SK-N-SH (cell line): ENCODE measurements at regions of chr11 and their contacts with region 1.

Region 1: GRCh38 chr11:35305670-35306382 is 113.5 kb downstream of the SLC1A2 start:
- DNase-seq: peak; percentile 63
- H3K4me3 ChIP-seq: no peak overlapping the region
- H3K27ac ChIP-seq: no peak overlapping the region
- H3K4me1 ChIP-seq: no peaks in the 10 kb centered on the region; a peak in 1 of 4 replicates
- H3K27me3 ChIP-seq: no peaks in the 10 kb centered on the region
- CTCF ChIP-seq: peak; percentile 59
- EP300 ChIP-seq: no peak
- RAD21 ChIP-seq: peak; percentile 85

Region 2: DNA sequence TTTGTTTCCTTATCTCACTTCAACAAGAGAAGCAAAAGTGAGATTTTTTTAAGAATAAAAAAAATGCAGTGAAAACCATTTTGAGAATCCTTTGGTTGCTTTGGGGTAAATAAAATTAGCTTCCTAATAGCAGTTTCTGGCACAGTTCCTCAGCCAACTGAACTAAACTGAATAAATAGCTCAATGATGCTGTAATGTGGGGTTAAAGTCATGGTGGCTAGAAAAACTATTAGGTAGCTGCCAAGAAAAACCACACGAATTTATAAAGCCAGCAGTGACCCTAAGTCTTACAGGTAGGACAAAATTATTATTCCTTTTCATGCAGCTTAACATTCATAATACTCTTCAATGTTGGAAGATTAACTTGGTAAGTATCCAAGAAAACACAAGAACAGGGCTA is 532.0 kb before region 1 on chr11:
- CTCF ChIA-PET with region 1: no interaction called
- POLR2A ChIA-PET with region 1: no interaction called
- DNase-seq: no peak
- H3K4me3 ChIP-seq: no peak overlapping the region
- H3K27ac ChIP-seq: no peak overlapping the region
- H3K4me1 ChIP-seq: no peaks in the 10 kb centered on the region
- H3K27me3 ChIP-seq: no peaks in the 10 kb centered on the region
- CTCF ChIP-seq: no peak
- EP300 ChIP-seq: no peak
- RAD21 ChIP-seq: no peak

Region 3: DNA sequence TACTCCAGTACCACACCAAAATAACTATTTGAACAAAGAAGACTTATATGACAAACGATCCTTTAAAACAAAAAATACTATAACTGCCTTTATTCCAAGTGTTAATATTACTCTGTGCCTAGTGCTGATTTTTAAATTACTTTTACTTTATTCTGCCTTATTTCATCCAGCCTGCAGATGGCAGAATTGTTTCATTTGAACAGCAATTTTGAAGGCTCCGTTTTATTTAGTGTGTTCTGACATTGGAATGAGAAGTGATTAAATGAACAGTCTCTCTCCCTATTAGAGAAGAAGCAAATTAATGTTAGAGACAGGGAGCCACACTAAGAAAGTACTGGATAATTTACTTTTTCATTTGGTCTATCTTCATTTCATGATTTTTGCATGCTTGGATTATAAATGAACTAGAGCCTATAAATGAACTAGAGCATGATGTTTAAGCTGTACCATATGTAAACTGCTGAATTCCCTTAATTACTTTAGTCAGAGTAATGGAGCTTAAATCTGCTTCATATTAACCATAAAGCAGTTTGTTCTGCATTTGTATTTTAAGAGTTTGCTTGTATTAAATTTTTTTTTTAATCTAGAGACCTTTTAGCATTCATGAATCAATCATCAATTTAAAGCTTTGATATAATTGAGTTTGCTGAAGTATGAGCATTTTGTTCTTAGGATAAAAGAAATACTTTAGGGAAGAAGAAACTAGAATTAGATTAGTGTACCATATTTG is 379.6 kb before region 1 on chr11:
- CTCF ChIA-PET with region 1: interaction called, 55 read pairs
- POLR2A ChIA-PET with region 1: no interaction called
- DNase-seq: peak; percentile 34
- H3K4me3 ChIP-seq: peak overlapping the region in 1 of 2 experiments; percentile 7; a peak in 1 of 4 replicates
- H3K27ac ChIP-seq: peak overlapping the region; percentile 63 to 67; a peak in 3 of 4 replicates
- H3K4me1 ChIP-seq: peaks cover 11 to 30% of the 10 kb centered on the region in 2 experiments; a peak in 2 of 4 replicates
- H3K27me3 ChIP-seq: no peaks in the 10 kb centered on the region
- CTCF ChIP-seq: peak; percentile 91
- EP300 ChIP-seq: 0 out of 4 replicates have a peak, but pooled peaks of 1 of the 2 experiments have one; percentile 2
- RAD21 ChIP-seq: peak; percentile 92

Region 4: GRCh38 chr11:34997952-34998528 is 307.8 kb before region 1 on chr11:
- CTCF ChIA-PET with region 1: interaction called, 11 read pairs
- POLR2A ChIA-PET with region 1: no interaction called
- DNase-seq: peak; percentile 4
- H3K4me3 ChIP-seq: no peak overlapping the region; a peak in 1 of 4 replicates
- H3K27ac ChIP-seq: peak overlapping the region in 1 of 2 experiments; percentile 79; a peak in 2 of 4 replicates
- H3K4me1 ChIP-seq: peaks cover 0 to 16% of the 10 kb centered on the region in 2 experiments; a peak in 2 of 4 replicates
- H3K27me3 ChIP-seq: no peaks in the 10 kb centered on the region
- CTCF ChIP-seq: peak; percentile 74
- EP300 ChIP-seq: peak in 1 of 2 experiments; percentile 40; a peak in 1 of 4 replicates
- RAD21 ChIP-seq: peak; percentile 69

Region 5: DNA sequence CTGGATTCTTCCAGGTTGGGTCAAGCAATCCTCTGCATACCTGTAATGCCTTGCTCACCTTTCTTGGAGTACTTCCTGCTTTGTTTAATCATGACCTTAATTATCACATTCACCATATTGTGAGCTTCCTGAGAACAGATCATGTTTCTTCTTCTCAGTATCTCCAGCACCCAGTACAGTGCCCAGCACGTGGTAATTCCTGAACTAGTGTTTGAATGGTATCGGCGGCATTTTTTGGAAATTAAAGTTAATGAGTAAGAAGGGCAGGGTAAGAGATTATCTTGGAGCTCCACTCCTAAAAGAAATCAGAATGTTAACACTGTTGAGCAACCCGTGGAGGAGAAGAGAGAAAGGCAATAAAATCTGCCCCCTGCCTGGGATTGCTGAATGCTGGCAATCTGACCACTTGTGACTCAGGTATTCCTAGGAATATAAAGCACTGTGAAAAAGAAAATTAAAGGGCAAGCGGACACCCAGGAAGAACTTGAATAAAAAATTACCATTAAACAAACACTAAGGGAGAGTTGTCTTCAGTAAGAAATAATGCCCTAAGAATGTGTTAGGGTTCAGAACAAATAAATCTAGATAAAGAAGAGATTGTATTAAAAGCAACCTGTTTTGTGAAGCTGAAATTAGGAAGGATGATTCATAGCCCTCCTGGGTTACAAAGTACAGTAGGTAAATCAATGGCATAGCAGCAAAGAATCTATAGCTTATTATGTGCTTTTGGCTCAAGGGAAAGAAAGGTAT is 296.5 kb before region 1 on chr11:
- CTCF ChIA-PET with region 1: interaction called, 12 read pairs
- POLR2A ChIA-PET with region 1: no interaction called
- DNase-seq: no peak
- H3K4me3 ChIP-seq: no peak overlapping the region
- H3K27ac ChIP-seq: peak overlapping the region in 1 of 2 experiments; percentile 58; a peak in 2 of 4 replicates
- H3K4me1 ChIP-seq: peaks cover 0 to 9% of the 10 kb centered on the region in 2 experiments
- H3K27me3 ChIP-seq: no peaks in the 10 kb centered on the region
- CTCF ChIP-seq: no peak
- EP300 ChIP-seq: 0 out of 4 replicates have a peak, but pooled peaks of 1 of the 2 experiments have one; percentile 7
- RAD21 ChIP-seq: no peak

Region 6: GRCh38 chr11:35106595-35106994 is 199.2 kb before region 1 on chr11:
- CTCF ChIA-PET with region 1: no interaction called
- POLR2A ChIA-PET with region 1: no interaction called
- DNase-seq: no peak
- H3K4me3 ChIP-seq: no peak overlapping the region
- H3K27ac ChIP-seq: no peak overlapping the region
- H3K4me1 ChIP-seq: peaks cover 0 to 12% of the 10 kb centered on the region in 2 experiments; a peak in 3 of 4 replicates
- H3K27me3 ChIP-seq: no peaks in the 10 kb centered on the region
- CTCF ChIP-seq: no peak
- EP300 ChIP-seq: no peak
- RAD21 ChIP-seq: no peak

Region 7: GRCh38 chr11:35260342-35260985 is 45.4 kb before region 1 on chr11:
- CTCF ChIA-PET with region 1: interaction called, 11 read pairs
- POLR2A ChIA-PET with region 1: no interaction called
- DNase-seq: no peak
- H3K4me3 ChIP-seq: no peak overlapping the region
- H3K27ac ChIP-seq: peak overlapping the region in 1 of 2 experiments; percentile 76; a peak in 2 of 4 replicates
- H3K4me1 ChIP-seq: peaks cover 0 to 6% of the 10 kb centered on the region in 2 experiments; a peak in 3 of 4 replicates
- H3K27me3 ChIP-seq: no peaks in the 10 kb centered on the region
- CTCF ChIP-seq: no peak
- EP300 ChIP-seq: 0 out of 4 replicates have a peak, but pooled peaks of 1 of the 2 experiments have one; percentile 34
- RAD21 ChIP-seq: no peak

Region 8: GRCh38 chr11:35321532-35322359 is 15.9 kb after region 1 on chr11:
- CTCF ChIA-PET with region 1: interaction called, 14 read pairs
- POLR2A ChIA-PET with region 1: no interaction called
- DNase-seq: no peak
- H3K4me3 ChIP-seq: no peak overlapping the region
- H3K27ac ChIP-seq: no peak overlapping the region
- H3K4me1 ChIP-seq: peaks cover 2 to 10% of the 10 kb centered on the region in 2 experiments; a peak in 2 of 4 replicates
- H3K27me3 ChIP-seq: no peaks in the 10 kb centered on the region
- CTCF ChIP-seq: no peak
- EP300 ChIP-seq: no peak
- RAD21 ChIP-seq: no peak

Region 9: DNA sequence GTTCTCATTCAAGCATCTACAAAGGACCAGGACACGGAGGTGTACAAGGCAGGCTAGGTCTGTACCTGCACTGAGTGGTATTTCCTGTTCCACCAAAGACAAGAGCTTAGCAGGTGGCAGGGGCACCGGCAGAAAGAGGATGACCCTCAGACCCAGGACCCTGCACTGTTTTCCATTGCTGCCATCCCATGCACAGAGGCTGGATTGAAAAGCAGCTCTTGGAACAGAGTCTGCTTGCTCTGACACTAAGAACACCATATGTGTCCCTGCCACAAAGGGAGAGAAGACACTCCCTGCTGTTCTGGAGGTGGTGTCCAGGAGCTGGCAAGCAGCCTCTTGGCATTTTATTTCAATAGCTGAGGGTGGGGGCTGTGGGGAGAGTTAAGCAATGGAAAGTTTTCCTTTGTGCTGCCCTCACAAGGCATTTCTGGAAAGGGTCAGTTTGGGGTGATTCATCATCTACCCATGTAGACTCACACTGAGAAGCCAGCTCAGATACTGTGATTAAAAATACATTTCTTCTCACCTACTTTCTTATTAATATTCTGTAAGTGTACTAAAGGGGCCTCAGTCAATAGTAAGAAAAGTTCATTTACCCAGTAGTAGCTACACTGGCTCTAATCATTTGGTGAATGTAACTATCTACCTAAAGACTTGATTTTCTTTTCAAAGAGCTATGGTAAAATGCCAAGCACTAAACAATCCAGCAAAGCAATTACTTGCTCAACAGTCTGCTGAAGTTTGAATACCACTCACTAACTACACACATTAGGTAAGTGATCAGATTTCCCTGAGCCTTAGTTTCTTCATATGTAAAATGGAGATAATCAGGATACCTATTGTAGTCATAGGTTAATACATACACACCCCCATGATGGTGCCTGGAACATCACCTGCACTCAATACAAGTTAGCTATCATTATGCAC is 58.3 kb after region 1 on chr11:
- CTCF ChIA-PET with region 1: interaction called, 13 read pairs
- POLR2A ChIA-PET with region 1: no interaction called
- DNase-seq: no peak
- H3K4me3 ChIP-seq: no peak overlapping the region
- H3K27ac ChIP-seq: peak overlapping the region in 1 of 2 experiments; percentile 84; a peak in 2 of 4 replicates
- H3K4me1 ChIP-seq: peaks cover 3 to 8% of the 10 kb centered on the region in 2 experiments; a peak in 3 of 4 replicates
- H3K27me3 ChIP-seq: no peaks in the 10 kb centered on the region
- CTCF ChIP-seq: no peak
- EP300 ChIP-seq: peak in 1 of 2 experiments; percentile 88; a peak in 2 of 4 replicates
- RAD21 ChIP-seq: no peak